Posterior cingulate gyrus (tissue), 11 donors: ENCODE measurements at regions of chr7 and their contacts with region 1.

Region 1: DNA sequence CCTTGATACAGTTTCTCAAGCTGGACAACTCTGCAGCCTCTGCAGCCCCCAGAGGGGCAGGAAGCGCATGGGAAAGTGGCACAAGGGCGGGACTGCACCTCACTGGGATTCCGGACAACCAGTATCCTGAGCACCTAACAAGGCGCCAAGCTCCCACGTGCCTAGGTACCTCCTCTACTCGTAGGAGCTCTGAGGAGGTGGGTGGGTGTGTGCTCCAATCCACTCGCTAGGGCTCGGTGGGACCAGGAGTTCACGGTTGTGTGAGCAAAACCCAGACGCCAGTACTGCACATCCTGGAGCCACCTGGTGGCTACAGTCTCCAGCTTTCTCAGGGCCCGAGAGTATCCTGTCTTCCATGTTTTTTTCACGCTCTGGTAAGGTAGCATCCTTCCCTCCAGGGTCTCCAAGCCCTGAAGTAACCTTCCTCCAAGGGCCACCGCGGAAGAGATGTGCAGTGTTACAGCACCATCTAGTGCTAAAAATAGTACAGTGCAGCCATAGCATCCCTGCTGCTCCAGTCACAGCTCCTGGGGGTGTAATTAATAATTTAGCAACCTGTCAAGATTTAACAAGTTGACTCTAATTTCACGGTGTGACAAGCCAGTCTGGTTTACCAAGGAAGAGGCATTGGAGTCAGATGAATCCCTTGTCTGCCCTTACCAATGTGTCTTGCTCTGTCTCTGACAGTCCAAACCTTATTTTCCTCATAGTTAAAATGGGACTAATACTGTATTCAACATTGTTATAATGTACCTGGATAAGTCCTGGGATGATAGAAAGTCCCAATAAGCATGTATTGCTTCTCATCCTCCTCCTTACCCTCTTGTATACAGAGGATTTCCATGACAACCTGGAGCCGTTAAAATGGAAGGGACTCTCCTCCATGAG is 70.4 kb downstream of the HERPUD2 start:
- DNase-seq: peak in 4 of 10 donors; percentile 10 to 83 (median 28)

Region 2: DNA sequence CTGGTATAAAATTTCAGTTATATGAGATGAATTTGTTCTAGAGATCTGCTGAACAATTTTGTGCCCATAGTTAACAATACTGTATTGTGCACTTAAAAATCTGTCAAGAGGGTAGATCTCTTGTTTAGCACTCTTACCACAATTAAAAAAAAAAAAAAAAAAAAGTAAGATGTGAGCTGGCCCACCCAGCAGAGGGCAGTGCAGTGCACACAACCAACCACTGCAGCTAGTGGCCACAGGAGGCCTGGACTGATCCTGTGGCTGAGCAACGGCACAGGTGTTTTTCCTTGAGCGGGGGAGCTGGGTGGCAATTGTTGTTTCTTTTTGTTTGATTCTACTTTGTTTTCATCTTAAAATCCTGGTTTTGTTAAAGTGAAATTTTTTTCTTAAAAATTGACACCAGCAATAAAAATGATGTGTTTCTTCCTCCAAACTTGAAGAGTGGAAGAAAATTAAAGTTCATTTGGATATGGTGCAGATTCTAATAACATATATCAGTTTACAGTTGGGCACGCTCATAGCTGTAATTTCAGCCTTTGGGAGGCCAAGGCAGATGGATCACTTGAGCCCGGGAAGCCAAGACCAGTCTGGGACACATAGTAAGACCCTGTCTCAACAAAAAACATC is 199.6 kb before region 1 on chr7:
- intact Hi-C with region 1: loop called (anchors 2 kb)
- DNase-seq: peak in 3 of 10 donors; percentile 11 to 81 (median 36)